CD4-positive, alpha-beta memory T cell (primary cell): ENCODE measurements at regions of chr12 and their contacts with region 1.

Region 1: DNA sequence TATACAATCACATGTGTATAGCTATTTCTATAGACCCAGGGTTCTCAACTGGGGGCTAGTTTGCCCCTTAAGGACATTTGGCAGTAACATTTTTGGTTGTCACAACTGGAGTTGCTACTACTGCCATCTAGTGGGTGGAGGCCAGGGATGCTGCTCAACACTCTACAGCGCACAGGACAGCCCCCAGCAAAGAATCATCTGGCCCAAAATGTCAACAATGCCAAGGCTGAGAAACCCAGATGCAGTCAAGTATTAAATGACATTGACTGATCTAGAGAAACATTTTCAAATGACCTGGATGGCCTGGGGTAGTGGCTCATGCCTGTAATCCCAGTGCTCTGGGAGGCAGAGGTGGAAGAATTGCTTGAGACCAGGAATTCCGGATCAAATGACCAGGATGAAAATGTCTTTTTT is 5.8 kb downstream of the WSB2 start:
- DNase-seq: peak; percentile 64 to 81 (median 69)
- H3K4me3 ChIP-seq: no peak overlapping the region
- H3K4me3 Mint-ChIP-seq: peak overlapping the region in 4 of 8 donors; percentile 6 to 60 (median 50)
- H3K27ac ChIP-seq: no peak overlapping the region
- H3K27ac Mint-ChIP-seq: peak overlapping the region in 6 of 7 donors; percentile 75 to 85 (median 80)
- H3K4me1 ChIP-seq: peaks cover 28% of the 10 kb centered on the region
- H3K4me1 Mint-ChIP-seq: peaks cover 32 to 67% (median 45%) of the 10 kb centered on the region in 4 donors
- H3K27me3 ChIP-seq: no peaks in the 10 kb centered on the region
- H3K27me3 Mint-ChIP-seq: no peaks in the 10 kb centered on the region

Region 2: GRCh38 chr12:118035246-118036041 is 19.7 kb before region 1 on chr12:
- CTCF ChIA-PET with region 1: interaction called, 11 read pairs
- POLR2A ChIA-PET with region 1: interaction called, 5 read pairs
- intact Hi-C with region 1: no loop called
- DNase-seq: no peak
- H3K4me3 ChIP-seq: no peak overlapping the region
- H3K4me3 Mint-ChIP-seq: no peak overlapping the region
- H3K27ac ChIP-seq: no peak overlapping the region
- H3K27ac Mint-ChIP-seq: peak overlapping the region; percentile 5 to 87 (median 68)
- H3K4me1 ChIP-seq: no peaks in the 10 kb centered on the region
- H3K4me1 Mint-ChIP-seq: peaks cover 17 to 20% (median 19%) of the 10 kb centered on the region in 4 donors
- H3K27me3 ChIP-seq: no peaks in the 10 kb centered on the region
- H3K27me3 Mint-ChIP-seq: no peaks in the 10 kb centered on the region

Region 3: GRCh38 chr12:118044075-118044474 is 11.1 kb before region 1 on chr12:
- CTCF ChIA-PET with region 1: interaction called, 42 read pairs
- POLR2A ChIA-PET with region 1: no interaction called
- intact Hi-C with region 1: no loop called
- DNase-seq: no peak
- H3K4me3 ChIP-seq: no peak overlapping the region
- H3K4me3 Mint-ChIP-seq: no peak overlapping the region
- H3K27ac ChIP-seq: no peak overlapping the region
- H3K27ac Mint-ChIP-seq: peak overlapping the region in 6 of 7 donors; percentile 13 to 77 (median 48)
- H3K4me1 ChIP-seq: no peaks in the 10 kb centered on the region
- H3K4me1 Mint-ChIP-seq: peaks cover 2 to 14% (median 7%) of the 10 kb centered on the region in 4 donors
- H3K27me3 ChIP-seq: no peaks in the 10 kb centered on the region
- H3K27me3 Mint-ChIP-seq: no peaks in the 10 kb centered on the region